Aorta (tissue), 5 donors: ENCODE measurements at regions of chr12 and their contacts with region 1.

Region 1: GRCh38 chr12:5059358-5059757 is 15.7 kb downstream of the KCNA5 start:
- DNase-seq: peak in 1 of 2 donors; percentile 64
- ATAC-seq: peak; percentile 63
- H3K4me3 ChIP-seq: no peak overlapping the region
- H3K27ac ChIP-seq: peak overlapping the region; percentile 55 to 69
- H3K4me1 ChIP-seq: no peaks in the 10 kb centered on the region
- H3K27me3 ChIP-seq: no peaks in the 10 kb centered on the region

Region 2: GRCh38 chr12:5022465-5023061 is 36.8 kb before region 1 on chr12:
- intact Hi-C with region 1: loop called in 1 of 2 experiments (anchors 5 kb)
- DNase-seq: peak in 1 of 2 donors; percentile 81
- ATAC-seq: peak; percentile 63
- H3K4me3 ChIP-seq: no peak overlapping the region
- H3K27ac ChIP-seq: no peak overlapping the region
- H3K4me1 ChIP-seq: peaks cover 0 to 2% of the 10 kb centered on the region in 2 donors
- H3K27me3 ChIP-seq: no peaks in the 10 kb centered on the region

Region 3: DNA sequence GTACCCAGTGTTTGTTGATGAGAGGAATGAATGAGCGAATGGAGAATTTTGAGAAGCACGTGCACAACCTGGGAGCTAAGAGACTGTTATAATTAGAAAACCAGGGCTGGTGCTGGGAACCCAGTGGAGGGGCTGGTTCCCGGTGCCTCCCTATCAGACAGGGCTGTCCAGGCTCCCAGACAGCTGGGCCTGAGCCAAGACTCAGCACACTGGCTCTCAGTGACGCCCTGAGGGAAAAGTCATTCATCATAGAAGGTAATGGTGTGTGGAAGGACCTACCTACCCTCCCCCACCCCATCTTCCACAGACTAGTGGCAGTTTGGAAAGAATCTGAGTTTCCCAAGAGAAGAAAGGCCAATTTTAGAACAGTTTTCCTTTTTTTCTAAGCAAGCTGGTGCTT is 19.1 kb after region 1 on chr12:
- intact Hi-C with region 1: loop called in 1 of 2 experiments (anchors 2 kb)
- DNase-seq: peak; percentile 92 to 93
- ATAC-seq: peak; percentile 85
- H3K4me3 ChIP-seq: no peak overlapping the region
- H3K27ac ChIP-seq: peak overlapping the region in 1 of 2 donors; percentile 99
- H3K4me1 ChIP-seq: peaks cover 2 to 15% of the 10 kb centered on the region in 2 donors
- H3K27me3 ChIP-seq: no peaks in the 10 kb centered on the region